Lower leg skin (tissue), 4 donors: ENCODE measurements at regions of chr9 and their contacts with region 1.

Region 1: DNA sequence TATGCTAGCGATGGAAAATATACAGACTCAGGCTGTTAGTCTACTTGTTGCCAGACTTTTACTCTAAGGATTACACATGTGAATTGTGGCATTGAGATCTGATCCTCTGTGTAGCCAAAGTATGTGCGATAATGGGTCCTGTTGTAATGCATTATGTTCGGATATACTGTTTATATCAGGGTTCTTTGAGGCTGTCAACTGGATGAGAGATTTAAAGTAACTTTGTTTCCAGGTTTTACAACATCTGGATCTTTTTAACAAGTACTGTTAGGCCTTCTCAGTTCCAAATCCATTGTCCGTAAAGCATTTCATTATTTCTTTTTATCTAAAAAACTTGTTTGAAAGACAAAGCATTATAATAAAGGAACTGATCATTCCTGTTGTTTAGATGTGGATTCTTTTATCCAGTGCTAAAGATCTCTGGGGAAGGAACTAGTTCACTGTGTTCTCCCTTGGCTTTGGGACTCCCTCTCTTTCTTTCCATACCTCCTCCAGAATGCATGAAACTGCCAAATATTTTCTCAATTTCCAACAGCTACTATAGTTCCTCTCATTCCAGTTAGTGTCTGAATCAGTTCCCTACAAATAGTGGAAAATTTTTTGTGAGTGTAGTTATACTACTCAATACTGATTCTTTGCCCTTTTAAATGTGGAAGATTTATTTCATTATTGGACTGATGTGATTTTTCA is 68.8 kb downstream of the HACD4 start:
- DNase-seq: no peak
- H3K4me3 ChIP-seq: no peak overlapping the region
- CTCF ChIP-seq: no peak
- POLR2A ChIP-seq: no peak

Region 2: GRCh38 chr9:20373263-20373662 is 589.4 kb before region 1 on chr9:
- intact Hi-C with region 1: loop called (anchors 10 kb)
- DNase-seq: no peak
- H3K4me3 ChIP-seq: no peak overlapping the region
- CTCF ChIP-seq: no peak
- POLR2A ChIP-seq: no peak